AG04450 (cell line): ENCODE measurements at regions of chr3 and their contacts with region 1.

Region 1: DNA sequence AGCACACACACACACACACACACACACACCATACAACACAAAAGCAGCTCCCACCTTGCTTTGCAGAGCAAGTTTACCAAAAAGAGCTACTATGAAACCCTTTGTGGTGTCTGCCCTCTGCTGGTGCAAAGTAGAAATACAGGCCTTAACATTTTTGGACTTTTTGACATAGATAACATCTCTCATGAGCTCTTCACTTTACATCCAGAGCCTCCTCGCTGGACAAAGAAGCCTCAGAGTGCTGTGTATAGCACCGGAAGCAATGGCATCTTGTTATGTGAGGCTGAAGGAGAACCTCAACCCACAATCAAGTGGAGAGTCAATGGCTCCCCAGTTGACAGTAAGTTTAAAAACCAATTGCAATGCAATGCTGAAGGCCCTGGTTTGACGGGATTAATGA is 157.9 kb downstream of the CHL1 start:
- DNase-seq: peak; percentile 29
- H3K4me3 ChIP-seq: no peak overlapping the region
- H3K27ac ChIP-seq: no peak overlapping the region
- H3K27me3 ChIP-seq: no peaks in the 10 kb centered on the region
- CTCF ChIP-seq: peak; percentile 88

Region 2: GRCh38 chr3:54244-54643 is 300.2 kb before region 1 on chr3:
- CTCF ChIA-PET with region 1: interaction called, 10 read pairs
- POLR2A ChIA-PET with region 1: no interaction called
- DNase-seq: no peak
- H3K4me3 ChIP-seq: no peak overlapping the region
- H3K27ac ChIP-seq: no peak overlapping the region
- H3K27me3 ChIP-seq: no peaks in the 10 kb centered on the region
- CTCF ChIP-seq: no peak

Region 3: DNA sequence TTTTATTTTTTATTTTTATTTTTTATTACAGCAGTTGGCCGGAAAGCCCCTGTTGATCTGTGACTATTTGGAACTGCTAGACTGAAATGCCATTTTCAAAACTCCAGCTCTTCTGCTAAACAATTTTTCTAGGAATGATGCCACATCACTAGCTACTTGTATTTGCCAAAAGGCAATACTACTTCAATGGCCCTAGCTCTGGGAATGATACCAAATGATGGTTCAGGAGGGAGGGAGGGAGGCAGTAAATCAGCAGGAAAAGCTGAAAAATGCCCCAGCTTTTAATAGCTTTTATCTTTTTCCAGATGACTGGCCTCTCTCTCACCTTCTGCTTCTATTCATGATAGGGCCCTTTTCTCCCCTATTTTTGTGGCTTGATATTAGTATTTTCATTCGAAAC is 160.4 kb before region 1 on chr3:
- CTCF ChIA-PET with region 1: interaction called, 11 read pairs
- POLR2A ChIA-PET with region 1: no interaction called
- DNase-seq: no peak
- H3K4me3 ChIP-seq: no peak overlapping the region
- H3K27ac ChIP-seq: no peak overlapping the region
- H3K27me3 ChIP-seq: peaks cover 37% of the 10 kb centered on the region
- CTCF ChIP-seq: no peak

Region 4: GRCh38 chr3:248864-249520 is 105.4 kb before region 1 on chr3:
- CTCF ChIA-PET with region 1: interaction called, 16 read pairs
- POLR2A ChIA-PET with region 1: interaction called, 6 read pairs
- DNase-seq: no peak
- H3K4me3 ChIP-seq: no peak overlapping the region
- H3K27ac ChIP-seq: no peak overlapping the region
- H3K27me3 ChIP-seq: no peaks in the 10 kb centered on the region
- CTCF ChIP-seq: no peak

Region 5: GRCh38 chr3:308597-309321 is 45.7 kb before region 1 on chr3:
- CTCF ChIA-PET with region 1: interaction called, 12 read pairs
- POLR2A ChIA-PET with region 1: no interaction called
- DNase-seq: no peak
- H3K4me3 ChIP-seq: no peak overlapping the region
- H3K27ac ChIP-seq: no peak overlapping the region
- H3K27me3 ChIP-seq: no peaks in the 10 kb centered on the region
- CTCF ChIP-seq: no peak

Region 6: DNA sequence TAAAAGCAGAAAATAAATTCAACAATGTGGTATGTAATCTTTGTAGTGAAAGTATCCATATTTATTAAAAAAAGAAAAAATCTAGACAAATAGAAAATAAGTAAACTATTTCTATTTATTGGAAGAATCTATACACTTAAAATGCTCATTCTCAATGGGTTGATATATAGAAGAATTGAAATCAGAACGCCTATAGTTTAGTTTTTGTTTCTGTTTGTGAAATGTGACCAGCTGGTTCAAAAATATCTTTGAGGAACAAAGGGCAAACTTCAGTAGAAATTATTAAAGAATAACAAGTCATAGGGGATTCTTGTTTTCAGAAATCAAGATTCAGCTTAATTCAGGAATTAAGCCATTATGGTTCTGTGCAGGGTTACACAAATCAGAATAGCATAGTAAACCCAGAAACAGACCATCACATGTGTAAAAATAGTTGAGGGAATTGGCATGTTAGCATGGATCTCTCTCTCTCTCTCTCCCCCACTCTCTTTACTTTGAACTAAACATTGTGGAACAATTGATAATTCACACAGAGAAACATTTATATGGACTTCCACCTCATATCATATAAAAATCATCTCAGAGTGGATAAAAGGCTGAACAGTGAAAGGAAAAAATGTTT is 23.8 kb before region 1 on chr3:
- CTCF ChIA-PET with region 1: interaction called, 32 read pairs
- POLR2A ChIA-PET with region 1: no interaction called
- DNase-seq: no peak
- H3K4me3 ChIP-seq: no peak overlapping the region
- H3K27ac ChIP-seq: no peak overlapping the region
- H3K27me3 ChIP-seq: no peaks in the 10 kb centered on the region
- CTCF ChIP-seq: no peak

Region 7: GRCh38 chr3:481680-482079 is 127.2 kb after region 1 on chr3:
- CTCF ChIA-PET with region 1: no interaction called
- POLR2A ChIA-PET with region 1: no interaction called
- DNase-seq: no peak
- H3K4me3 ChIP-seq: no peak overlapping the region
- H3K27ac ChIP-seq: no peak overlapping the region
- H3K27me3 ChIP-seq: no peaks in the 10 kb centered on the region
- CTCF ChIP-seq: peak; percentile 20; the same call in 1 of the 2 replicates